ENCODE measurements at regions of chr1 and their contacts with region 1.

Region 1: DNA sequence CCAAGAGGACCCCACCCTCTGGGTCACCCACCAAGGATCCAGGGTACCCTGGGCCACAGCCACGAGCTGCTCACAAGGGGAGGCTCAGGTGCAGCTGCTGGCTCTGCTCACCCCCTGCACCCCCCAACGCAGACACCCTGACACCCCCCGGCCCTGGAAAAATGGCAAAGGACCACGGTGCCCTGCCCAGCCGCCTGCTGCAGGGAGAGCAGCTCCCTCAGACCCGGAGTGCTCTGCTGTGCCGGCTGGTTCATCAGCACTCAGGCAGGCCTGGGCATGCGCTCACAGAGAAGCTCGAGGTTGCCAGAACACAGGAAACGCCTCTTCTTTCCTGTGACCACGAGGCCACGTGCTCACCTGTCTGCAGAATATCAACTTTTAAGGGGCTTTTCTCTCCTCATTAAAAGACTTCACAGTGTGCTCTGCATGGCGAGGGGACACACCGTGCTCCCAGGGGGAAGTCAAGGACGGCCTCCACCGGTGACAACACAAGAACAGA is 4.3 kb upstream of the C1QTNF12 start:
- DNase-seq: peak; percentile 62
- H3K4me3 Mint-ChIP-seq: peak overlapping the region; percentile 37
- H3K27ac Mint-ChIP-seq: peak overlapping the region; percentile 89
- H3K4me1 Mint-ChIP-seq: peaks cover 14% of the 10 kb centered on the region
- H3K27me3 Mint-ChIP-seq: no peaks in the 10 kb centered on the region

Region 2: GRCh38 chr1:1122078-1122811 is 128.6 kb before region 1 on chr1:
- intact Hi-C with region 1: loop called (anchors 1 kb)
- DNase-seq: peak; percentile 80
- H3K4me3 Mint-ChIP-seq: no peak overlapping the region
- H3K27ac Mint-ChIP-seq: no peak overlapping the region
- H3K4me1 Mint-ChIP-seq: peaks cover 5% of the 10 kb centered on the region
- H3K27me3 Mint-ChIP-seq: peaks cover 11% of the 10 kb centered on the region

Region 3: GRCh38 chr1:1206376-1207260 is 44.2 kb before region 1 on chr1 and contains the start of gene TNFRSF18:
- intact Hi-C with region 1: loop called (anchors 5 kb)
- DNase-seq: peak; percentile 47
- H3K4me3 Mint-ChIP-seq: peak within 1 kb of the TSS; percentile 86
- H3K27ac Mint-ChIP-seq: peak within 1 kb of the TSS; percentile 99
- H3K4me1 Mint-ChIP-seq: peaks cover 24% of the 10 kb centered on the region
- H3K27me3 Mint-ChIP-seq: no peaks in the 10 kb centered on the region
- total RNA-seq, gene TNFRSF18: 350 and 356 TPM in 2 replicates

Region 4: DNA sequence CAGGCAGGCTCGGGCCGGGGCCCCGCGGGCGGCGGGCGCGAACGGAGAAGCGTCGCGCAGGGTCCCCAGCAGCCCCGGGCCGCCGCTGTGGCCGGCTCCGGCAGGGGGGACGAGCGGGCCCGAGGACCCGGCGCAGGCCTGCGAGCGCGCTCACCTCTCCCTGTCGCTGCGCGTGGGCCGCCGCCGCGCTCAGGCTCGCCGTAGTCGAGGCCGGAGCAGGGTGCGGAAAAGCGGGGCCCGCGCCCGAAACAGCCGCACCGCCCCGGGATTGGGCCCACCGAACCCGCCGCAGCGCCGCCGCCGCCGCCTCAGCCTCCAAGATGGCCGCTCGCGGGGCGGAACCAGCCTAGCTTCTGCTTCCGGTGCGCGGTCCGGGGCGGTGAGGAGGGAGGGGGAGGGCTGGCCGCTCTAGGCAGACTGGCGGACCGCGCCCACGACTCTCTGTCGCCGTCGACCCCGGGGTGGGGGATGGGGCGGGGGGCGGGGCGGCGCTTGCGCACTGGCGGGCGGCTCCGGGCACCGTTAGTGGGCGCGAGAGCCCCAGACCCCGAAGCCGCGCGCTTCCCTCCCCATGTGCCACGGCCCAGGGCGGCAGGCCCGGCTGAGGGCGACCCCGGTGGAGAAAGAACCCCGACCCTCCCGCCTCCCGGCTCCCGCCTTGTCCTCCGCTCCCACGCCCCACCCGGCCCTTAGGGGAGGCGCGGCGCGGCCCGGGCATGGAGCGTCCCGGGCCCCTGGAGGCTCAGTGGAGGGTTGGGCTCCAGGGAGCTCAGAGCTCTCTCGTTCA is 22.9 kb after region 1 on chr1 and contains the start of gene UBE2J2:
- intact Hi-C with region 1: loop called (anchors 1 kb)
- DNase-seq: peak; percentile 86
- H3K4me3 Mint-ChIP-seq: peak within 1 kb of the TSS; percentile 90
- H3K27ac Mint-ChIP-seq: peak within 1 kb of the TSS; percentile 63
- H3K4me1 Mint-ChIP-seq: peaks cover 40% of the 10 kb centered on the region
- H3K27me3 Mint-ChIP-seq: no peaks in the 10 kb centered on the region
- total RNA-seq, gene UBE2J2: 95.6 and 99.5 TPM in 2 replicates

Region 5: GRCh38 chr1:2894381-2895041 is 1643.7 kb after region 1 on chr1:
- intact Hi-C with region 1: no loop called
- DNase-seq: no peak
- H3K4me3 Mint-ChIP-seq: no peak overlapping the region
- H3K27ac Mint-ChIP-seq: no peak overlapping the region
- H3K4me1 Mint-ChIP-seq: no peaks in the 10 kb centered on the region
- H3K27me3 Mint-ChIP-seq: no peaks in the 10 kb centered on the region

Measured in activated T-helper 1 cell treated with anti-CD3 and anti-CD28 coated beads, Interleukin-12 subunit alpha, Interleukin-12 subunit beta, Interleukin-2, Interleukin-4 antibody, amounts not matched to agents 30 ng/mL and 10 ng/mL and 1 ng/mL, durations not matched to agents 14 hours and 24 hours and 36 hours (primary cell).